Activated B cell treated with CpG ODN at 0.5 μM for 24 hours (primary cell): ENCODE measurements at regions of chr7 and their contacts with region 1.

Region 1: GRCh38 chr7:105522062-105522936 is at the start of gene PUS7:
- DNase-seq: peak; percentile 73
- ATAC-seq: peak; percentile 94
- H3K4me3 Mint-ChIP-seq: peak within 1 kb of the TSS; percentile 93
- H3K27ac Mint-ChIP-seq: peak within 1 kb of the TSS; percentile 82
- H3K4me1 Mint-ChIP-seq: peaks cover 27% of the 10 kb centered on the region
- H3K27me3 Mint-ChIP-seq: no peaks in the 10 kb centered on the region
- CTCF ChIP-seq: no peak
- total RNA-seq, gene PUS7: 17.8 and 18.0 TPM in 2 replicates

Region 2: DNA sequence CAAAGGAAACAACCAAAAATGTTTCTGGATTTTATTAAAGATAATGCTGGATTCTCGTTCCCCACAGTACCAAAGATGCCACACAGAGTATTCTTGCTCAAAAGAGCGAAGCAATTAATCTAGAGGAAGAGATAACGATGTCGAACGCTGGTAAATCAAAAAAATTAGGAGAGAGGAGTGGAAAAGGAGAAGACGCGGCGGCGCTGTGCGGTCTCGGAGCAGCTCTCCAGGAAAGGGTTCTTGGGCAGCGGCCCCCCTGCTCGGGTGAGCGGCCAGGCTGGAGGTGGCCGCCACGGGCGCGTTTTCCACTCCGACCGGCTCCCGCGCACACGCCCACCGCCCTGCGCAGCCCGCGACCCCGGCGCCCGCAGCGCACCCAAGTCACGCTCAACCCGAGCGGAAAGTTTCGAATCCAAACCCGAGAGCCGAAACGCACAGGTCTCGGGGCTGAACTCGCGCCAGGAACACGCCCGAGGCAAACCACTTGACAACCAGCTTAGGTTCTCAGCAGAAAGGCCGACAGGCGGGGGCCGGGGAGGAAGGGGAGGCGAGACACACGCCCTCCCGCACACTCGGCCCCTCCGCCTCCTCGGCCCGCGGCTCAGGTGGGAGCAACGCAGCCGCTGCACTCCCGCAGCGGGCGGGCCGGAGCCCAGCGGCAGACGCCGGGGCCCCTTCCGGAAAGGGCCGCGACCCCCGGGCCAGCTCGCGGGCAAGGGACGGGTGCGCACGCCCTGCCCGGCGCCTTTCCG is 134.5 kb before region 1 on chr7:
- CTCF ChIA-PET with region 1: no interaction called
- POLR2A ChIA-PET with region 1: no interaction called
- intact Hi-C with region 1: loop called (anchors 1 kb)
- DNase-seq: peak; percentile 48
- ATAC-seq: peak; percentile 51
- H3K4me3 Mint-ChIP-seq: peak overlapping the region; percentile 88
- H3K27ac Mint-ChIP-seq: peak overlapping the region; percentile 69
- H3K4me1 Mint-ChIP-seq: peaks cover 27% of the 10 kb centered on the region
- H3K27me3 Mint-ChIP-seq: no peaks in the 10 kb centered on the region
- CTCF ChIP-seq: no peak